Activated T-helper 2 cell treated with anti-CD3 and anti-CD28 coated beads, Interferon-gamma antibody, Interleukin-2, Interleukin-4, amounts not matched to agents 10 μg/mL and 5 μg/mL and 100 μg/mL, durations not matched to agents 14 hours and 24 hours and 36 hours (primary cell): ENCODE measurements at regions of chr12 and their contacts with region 1.

Region 1: DNA sequence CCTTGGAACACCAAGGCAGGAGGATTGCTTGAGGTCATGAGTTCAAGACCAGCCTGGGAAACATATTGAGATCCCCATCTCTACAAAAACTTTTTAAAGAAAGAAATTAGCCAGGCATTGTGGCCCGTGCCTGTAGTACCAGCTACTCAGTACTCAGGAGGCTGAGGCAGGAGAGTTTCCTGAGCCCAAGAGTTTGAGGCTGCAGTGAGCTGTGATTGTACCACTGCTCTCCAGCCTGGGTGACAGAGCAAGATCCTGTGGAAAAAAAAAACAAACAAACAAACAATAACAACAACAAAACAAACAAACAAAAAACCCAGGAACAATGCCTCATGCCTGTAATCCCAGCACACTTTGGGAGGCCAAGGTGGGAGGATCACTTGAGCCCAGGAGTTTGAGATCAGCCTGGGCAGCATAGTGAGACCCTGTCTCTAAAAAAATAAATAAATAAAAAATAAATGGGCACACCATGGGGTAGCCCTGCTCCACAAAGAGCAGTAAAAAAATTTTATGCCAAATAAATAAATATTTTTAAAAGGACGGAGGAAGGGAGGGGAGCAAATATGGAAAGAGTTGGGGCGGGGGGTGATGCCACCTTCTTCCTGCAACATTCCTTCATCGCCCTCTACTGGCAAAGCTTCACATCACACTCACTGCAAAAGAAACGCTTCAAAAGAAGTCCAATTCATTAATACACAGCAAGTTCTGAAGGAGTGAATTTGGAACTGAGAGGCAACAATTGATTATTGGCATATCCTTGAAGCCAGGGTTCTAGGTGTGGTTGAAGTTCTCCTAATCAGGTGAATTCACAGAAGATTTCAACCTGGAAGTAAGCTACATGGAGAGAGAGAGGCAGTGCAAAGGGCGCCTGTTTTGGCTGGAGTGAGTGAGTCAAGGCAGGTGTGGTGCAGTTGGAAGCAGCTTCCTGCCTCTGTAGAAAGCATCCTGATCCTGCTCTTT is 8.8 kb upstream of the GNPTAB start:
- DNase-seq: peak; percentile 46
- H3K4me3 Mint-ChIP-seq: no peak overlapping the region
- H3K27ac Mint-ChIP-seq: no peak overlapping the region
- H3K4me1 Mint-ChIP-seq: peaks cover 11% of the 10 kb centered on the region
- H3K27me3 Mint-ChIP-seq: peaks cover 7% of the 10 kb centered on the region

Region 2: GRCh38 chr12:101414533-101415119 is 425.0 kb before region 1 on chr12:
- intact Hi-C with region 1: loop called (anchors 1 kb)
- DNase-seq: no peak
- H3K4me3 Mint-ChIP-seq: no peak overlapping the region
- H3K27ac Mint-ChIP-seq: no peak overlapping the region
- H3K4me1 Mint-ChIP-seq: no peaks in the 10 kb centered on the region
- H3K27me3 Mint-ChIP-seq: peaks cover 18% of the 10 kb centered on the region

Region 3: GRCh38 chr12:101670007-101670687 is 169.5 kb before region 1 on chr12:
- intact Hi-C with region 1: loop called (anchors 1 kb)
- DNase-seq: peak; percentile 24
- H3K4me3 Mint-ChIP-seq: no peak overlapping the region
- H3K27ac Mint-ChIP-seq: no peak overlapping the region
- H3K4me1 Mint-ChIP-seq: peaks cover 16% of the 10 kb centered on the region
- H3K27me3 Mint-ChIP-seq: peaks cover 8% of the 10 kb centered on the region

Region 4: GRCh38 chr12:101773650-101774162 is 65.9 kb before region 1 on chr12:
- intact Hi-C with region 1: loop called (anchors 1 kb)
- DNase-seq: peak; percentile 52
- H3K4me3 Mint-ChIP-seq: no peak overlapping the region
- H3K27ac Mint-ChIP-seq: peak overlapping the region; percentile 48
- H3K4me1 Mint-ChIP-seq: peaks cover 41% of the 10 kb centered on the region
- H3K27me3 Mint-ChIP-seq: no peaks in the 10 kb centered on the region

Region 5: GRCh38 chr12:101854747-101855146 is 15.1 kb after region 1 on chr12:
- intact Hi-C with region 1: no loop called
- DNase-seq: no peak
- H3K4me3 Mint-ChIP-seq: no peak overlapping the region
- H3K27ac Mint-ChIP-seq: no peak overlapping the region
- H3K4me1 Mint-ChIP-seq: peaks cover 24% of the 10 kb centered on the region
- H3K27me3 Mint-ChIP-seq: no peaks in the 10 kb centered on the region